ENCODE measurements at regions of chr3 and their contacts with region 1.

Region 1: DNA sequence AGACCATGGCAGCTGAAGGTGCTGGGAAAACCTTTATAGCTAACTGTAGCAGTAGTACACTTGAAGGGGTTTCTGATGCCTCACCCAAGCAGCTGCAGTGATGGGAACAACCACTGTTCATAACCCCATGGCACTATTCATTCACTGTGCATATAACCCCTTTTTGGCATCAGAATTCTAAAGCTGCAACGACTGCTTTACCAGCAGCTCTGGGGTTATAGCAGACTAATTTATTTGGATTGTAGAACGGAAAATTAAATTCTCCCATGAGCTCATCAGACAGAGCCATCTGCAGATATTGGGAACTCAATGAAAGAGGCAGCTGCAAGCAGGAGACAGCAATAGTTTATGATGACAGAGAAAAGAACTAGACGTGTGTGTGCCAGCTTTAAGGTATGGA is 28.6 kb downstream of the TFDP2 start:
- DNase-seq: no peak
- H3K4me3 ChIP-seq: no peak overlapping the region
- H3K27ac ChIP-seq: no peak overlapping the region
- H3K4me1 ChIP-seq: peaks cover 5% of the 10 kb centered on the region
- H3K27me3 ChIP-seq: no peaks in the 10 kb centered on the region
- CTCF ChIP-seq: no peak

Region 2: DNA sequence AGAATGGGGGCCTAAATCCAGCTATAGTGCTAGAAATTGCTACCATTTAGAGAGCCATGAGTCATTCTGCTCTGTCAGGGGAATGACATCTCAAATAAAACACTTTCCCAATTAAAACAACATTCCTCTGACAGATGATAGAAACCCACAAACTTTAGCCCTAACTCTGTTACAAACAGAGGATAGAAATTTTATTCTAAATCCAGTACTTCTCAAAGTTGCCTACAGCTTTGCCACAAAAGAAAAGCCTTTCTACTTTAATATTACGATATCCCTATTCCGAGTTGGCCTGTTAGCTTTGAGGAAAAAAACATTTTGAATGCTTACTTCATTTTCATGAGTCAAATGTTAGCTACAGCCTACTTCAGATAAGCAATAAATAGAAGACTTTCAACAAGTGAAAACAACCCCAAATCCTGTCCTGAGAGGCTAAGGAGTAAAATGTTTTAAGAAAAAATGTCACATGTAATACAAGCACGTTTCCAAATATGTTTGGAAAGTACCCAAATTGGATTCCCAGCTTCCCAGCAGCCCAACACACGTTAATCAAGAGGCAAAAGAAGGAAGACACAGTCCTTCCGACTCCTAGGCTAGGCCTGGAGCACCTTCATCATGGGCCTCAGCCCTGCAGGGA is 160.7 kb before region 1 on chr3:
- CTCF ChIA-PET with region 1: no interaction called
- dilution Hi-C with region 1: no loop called
- in situ Hi-C with region 1: no loop called
- intact Hi-C with region 1: loop called (anchors 2 kb)
- DNase-seq: peak; percentile 61
- H3K4me3 ChIP-seq: no peak overlapping the region
- H3K27ac ChIP-seq: peak overlapping the region; percentile 57
- H3K4me1 ChIP-seq: peaks cover 21% of the 10 kb centered on the region
- H3K27me3 ChIP-seq: no peaks in the 10 kb centered on the region
- CTCF ChIP-seq: no peak

Region 3: GRCh38 chr3:142028243-142028777 is 92.4 kb before region 1 on chr3:
- CTCF ChIA-PET with region 1: interaction called, 3 read pairs
- dilution Hi-C with region 1: no loop called
- in situ Hi-C with region 1: no loop called
- intact Hi-C with region 1: loop called (anchors 5 kb)
- DNase-seq: peak; percentile 67
- H3K4me3 ChIP-seq: peak overlapping the region; percentile 52 to 54 (median 52)
- H3K27ac ChIP-seq: peak overlapping the region; percentile 42
- H3K4me1 ChIP-seq: peaks cover 5% of the 10 kb centered on the region
- H3K27me3 ChIP-seq: no peaks in the 10 kb centered on the region
- CTCF ChIP-seq: no peak